RWPE1 (cell line): ENCODE measurements at regions of chr20 and their contacts with region 1.

Region 1: GRCh38 chr20:33262658-33263065 is 20.4 kb upstream of the BPIFB1 start:
- DNase-seq: peak; percentile 60
- H3K27ac ChIP-seq: no peak overlapping the region
- CTCF ChIP-seq: peak; percentile 71

Region 2: DNA sequence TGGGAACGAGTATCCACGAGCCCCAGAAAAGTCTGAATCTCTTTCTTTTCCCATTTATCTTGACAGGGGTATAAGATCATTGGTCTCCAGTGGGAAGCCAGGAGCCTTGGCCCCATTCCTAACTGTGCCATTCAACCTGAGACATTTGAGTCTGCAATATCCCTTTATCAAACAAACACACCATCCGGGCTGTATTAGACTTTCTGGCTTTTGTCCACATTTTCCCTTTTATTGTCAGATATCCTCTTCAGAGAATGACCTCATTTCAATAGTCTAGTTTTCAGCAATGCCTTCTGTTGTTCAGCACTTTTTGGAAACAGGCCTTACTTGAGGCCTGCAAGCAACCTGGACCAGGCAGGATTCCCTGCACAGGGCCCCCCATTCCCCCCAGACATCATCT is 11.2 kb before region 1 on chr20:
- CTCF ChIA-PET with region 1: interaction called, 10 read pairs
- POLR2A ChIA-PET with region 1: no interaction called
- DNase-seq: no peak
- H3K27ac ChIP-seq: no peak overlapping the region
- CTCF ChIP-seq: no peak

Region 3: GRCh38 chr20:33276303-33277113 is 13.8 kb after region 1 on chr20:
- CTCF ChIA-PET with region 1: interaction called, 10 read pairs
- POLR2A ChIA-PET with region 1: no interaction called
- DNase-seq: no peak
- H3K27ac ChIP-seq: no peak overlapping the region
- CTCF ChIP-seq: no peak

Region 4: DNA sequence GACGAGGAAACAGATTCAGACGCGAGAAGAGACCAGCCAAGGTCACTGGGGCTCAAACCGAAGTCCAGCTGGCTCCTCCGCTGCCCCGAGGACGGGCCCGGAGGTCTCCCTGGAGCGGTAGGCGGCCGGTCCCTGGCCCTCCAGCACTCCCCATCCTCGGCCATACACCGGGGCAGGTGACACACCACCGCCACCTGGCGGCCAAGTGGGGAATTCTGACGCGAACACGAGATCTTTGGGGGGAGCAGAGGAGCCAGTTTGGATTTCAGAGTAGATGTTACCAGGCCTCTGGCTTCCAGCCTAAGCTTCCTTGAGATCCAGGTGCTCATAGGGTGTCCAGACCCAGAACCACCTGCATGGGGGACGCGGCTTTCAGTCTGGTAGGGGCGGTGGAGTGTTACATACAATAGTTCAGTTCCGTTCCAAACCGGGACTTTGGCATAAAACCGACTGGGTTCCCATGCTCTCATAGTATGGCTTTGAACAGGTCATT is 36.5 kb after region 1 on chr20:
- CTCF ChIA-PET with region 1: interaction called, 19 read pairs
- POLR2A ChIA-PET with region 1: no interaction called
- DNase-seq: peak; percentile 90
- H3K27ac ChIP-seq: no peak overlapping the region
- CTCF ChIP-seq: peak; percentile 99

Region 5: GRCh38 chr20:33322456-33322855 is 59.8 kb after region 1 on chr20:
- CTCF ChIA-PET with region 1: no interaction called
- POLR2A ChIA-PET with region 1: no interaction called
- DNase-seq: no peak
- H3K27ac ChIP-seq: no peak overlapping the region
- CTCF ChIP-seq: no peak

Region 6: DNA sequence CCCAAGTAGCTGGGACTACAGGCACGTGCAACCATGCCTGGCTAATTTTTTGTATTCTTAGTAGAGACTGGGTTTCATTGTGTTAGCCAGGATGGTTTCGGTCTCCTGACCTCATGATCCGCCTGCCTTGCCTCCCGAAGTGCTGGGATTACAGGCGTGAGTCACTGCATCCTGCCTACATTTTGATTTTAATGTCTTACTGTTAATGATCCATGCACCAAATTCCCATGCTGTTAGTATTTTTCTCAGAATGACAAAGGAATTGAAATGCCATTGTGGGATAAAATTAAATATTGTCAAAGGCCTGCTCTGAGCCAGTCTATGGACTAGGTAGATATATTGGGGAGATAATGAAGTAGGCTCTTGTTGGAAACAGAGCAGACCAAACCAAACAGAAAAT is 255.4 kb after region 1 on chr20:
- CTCF ChIA-PET with region 1: no interaction called
- POLR2A ChIA-PET with region 1: no interaction called
- DNase-seq: peak; percentile 57
- H3K27ac ChIP-seq: peak overlapping the region; percentile 67
- CTCF ChIP-seq: no peak